Naive thymus-derived CD4-positive, alpha-beta T cell (primary cell): ENCODE measurements at regions of chr19 and their contacts with region 1.

Region 1: DNA sequence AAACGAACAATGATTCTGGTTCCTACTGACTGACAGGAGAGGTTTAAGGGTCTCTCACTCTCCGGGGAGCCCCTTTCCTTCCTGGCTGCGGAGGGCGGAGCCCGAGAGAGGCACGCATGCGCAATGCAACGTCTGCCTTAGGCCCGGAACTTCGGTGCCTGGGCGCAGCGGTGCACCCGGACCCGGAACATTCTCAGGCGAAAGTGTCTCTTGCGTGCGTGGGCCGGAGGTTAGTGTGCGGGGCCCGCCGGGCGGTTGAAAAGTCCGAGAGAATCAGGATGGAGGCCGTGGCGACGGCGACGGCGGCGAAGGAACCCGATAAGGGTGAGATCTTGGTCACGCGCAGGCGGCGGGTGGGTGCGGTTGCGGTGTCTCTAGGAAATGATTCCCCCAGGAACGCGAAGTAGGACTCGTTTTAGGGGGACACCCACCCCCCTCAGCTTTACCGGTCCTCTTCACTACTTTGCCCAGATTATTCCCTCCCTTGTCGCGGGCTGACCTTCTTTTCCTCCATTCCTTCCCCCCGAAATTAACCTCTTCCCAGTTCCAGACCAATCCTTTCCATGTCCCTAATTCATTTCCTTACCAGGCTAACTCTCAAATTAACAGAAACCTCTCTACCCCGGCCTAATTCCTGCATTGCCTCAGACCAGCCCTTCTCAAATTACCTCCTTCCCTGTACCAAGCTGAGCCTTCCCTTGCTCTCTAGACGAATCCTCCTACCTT is at the start of gene CCDC97:
- DNase-seq: peak; percentile 85 to 94 (median 91)
- ATAC-seq: peak; percentile 72
- H3K4me3 ChIP-seq: peak within 1 kb of the TSS; percentile 72
- H3K4me3 Mint-ChIP-seq: peak within 1 kb of the TSS; percentile 93 to 100 (median 96)
- H3K27ac ChIP-seq: peak within 1 kb of the TSS; percentile 87
- H3K27ac Mint-ChIP-seq: peak within 1 kb of the TSS; percentile 94 to 99 (median 98)
- H3K4me1 ChIP-seq: peaks cover 51 to 60% of the 10 kb centered on the region in 2 donors
- H3K4me1 Mint-ChIP-seq: peaks cover 52 to 90% (median 69%) of the 10 kb centered on the region in 7 donors
- H3K27me3 ChIP-seq: no peaks in the 10 kb centered on the region
- H3K27me3 Mint-ChIP-seq: peaks cover 0 to 3% (median 0%) of the 10 kb centered on the region in 5 donors
- total RNA-seq, gene CCDC97: 35.9 to 56.5 (median 49.1) TPM

Region 2: GRCh38 chr19:40974633-40975037 is 335.6 kb before region 1 on chr19:
- CTCF ChIA-PET with region 1: interaction called, 4 read pairs
- POLR2A ChIA-PET with region 1: interaction called, 3 read pairs
- intact Hi-C with region 1: loop called (anchors 1 to 5 kb)
- DNase-seq: peak; percentile 54 to 84 (median 76)
- ATAC-seq: peak; percentile 87
- H3K4me3 ChIP-seq: no peak overlapping the region
- H3K4me3 Mint-ChIP-seq: peak overlapping the region in 1 of 10 donors; percentile 45
- H3K27ac ChIP-seq: no peak overlapping the region
- H3K27ac Mint-ChIP-seq: peak overlapping the region in 3 of 9 donors; percentile 53 to 74 (median 63)
- H3K4me1 ChIP-seq: peaks cover 16 to 19% of the 10 kb centered on the region in 2 donors
- H3K4me1 Mint-ChIP-seq: peaks cover 13 to 53% (median 27%) of the 10 kb centered on the region in 7 donors
- H3K27me3 ChIP-seq: no peaks in the 10 kb centered on the region
- H3K27me3 Mint-ChIP-seq: peaks cover 2 to 38% (median 3%) of the 10 kb centered on the region in 5 donors

Region 3: DNA sequence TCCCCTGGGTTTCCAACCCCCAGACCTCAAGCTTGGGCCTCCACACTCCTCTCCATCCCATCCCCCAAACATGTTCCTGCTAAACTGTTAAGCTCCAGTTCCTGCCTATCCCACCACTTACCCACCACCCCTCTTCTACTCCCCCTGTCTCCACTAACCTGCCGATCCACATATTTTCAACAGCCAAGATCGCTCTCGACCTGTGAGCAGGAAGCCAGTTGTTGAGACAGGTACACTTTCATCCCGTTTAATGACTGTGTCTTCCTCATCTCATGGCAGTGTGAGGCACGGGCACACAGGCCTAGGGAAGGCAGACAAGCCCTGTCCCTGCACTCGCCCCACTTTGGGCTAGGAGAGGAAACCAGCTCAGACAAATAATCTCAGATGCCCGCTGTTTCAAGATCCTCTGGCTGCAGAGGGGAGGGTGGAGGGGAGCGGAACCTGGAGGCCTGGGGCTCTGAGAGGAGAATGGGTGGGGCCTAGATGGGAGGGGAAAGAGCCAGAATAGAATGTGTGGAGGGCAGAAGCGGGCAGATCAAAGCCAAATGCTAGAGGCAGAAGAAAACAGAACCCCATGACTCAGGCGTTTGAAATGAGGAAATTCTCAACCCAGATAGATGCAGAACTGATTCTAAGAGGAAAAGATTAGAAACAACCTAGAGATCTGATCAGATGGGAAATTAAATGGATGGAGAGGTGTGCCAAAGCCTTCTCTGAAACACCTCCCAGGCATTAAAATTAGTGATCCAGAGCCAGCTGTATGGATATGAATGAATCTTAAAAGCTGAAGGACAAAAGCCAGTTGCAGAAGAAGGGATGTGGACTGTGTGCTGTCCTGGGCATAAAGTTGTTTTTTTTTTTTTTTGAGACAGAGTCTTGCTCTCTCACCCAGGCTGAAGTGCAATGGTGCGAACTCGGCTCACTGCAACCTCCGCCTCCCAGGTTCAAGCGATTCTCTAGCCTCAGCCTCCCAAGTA is 134.1 kb before region 1 on chr19:
- CTCF ChIA-PET with region 1: no interaction called
- POLR2A ChIA-PET with region 1: no interaction called
- intact Hi-C with region 1: no loop called
- DNase-seq: peak in 7 of 9 donors; percentile 22 to 64 (median 50)
- ATAC-seq: peak; percentile 95
- H3K4me3 ChIP-seq: no peak overlapping the region
- H3K4me3 Mint-ChIP-seq: peak overlapping the region; percentile 46 to 73 (median 64)
- H3K27ac ChIP-seq: peak overlapping the region; percentile 33
- H3K27ac Mint-ChIP-seq: peak overlapping the region; percentile 49 to 87 (median 79)
- H3K4me1 ChIP-seq: peaks cover 0 to 17% of the 10 kb centered on the region in 2 donors
- H3K4me1 Mint-ChIP-seq: peaks cover 7 to 24% (median 17%) of the 10 kb centered on the region in 7 donors
- H3K27me3 ChIP-seq: no peaks in the 10 kb centered on the region
- H3K27me3 Mint-ChIP-seq: no peaks in the 10 kb centered on the region

Region 4: GRCh38 chr19:41206926-41207750 is 103.1 kb before region 1 on chr19:
- CTCF ChIA-PET with region 1: interaction called, 78 read pairs
- POLR2A ChIA-PET with region 1: interaction called, 66 read pairs
- intact Hi-C with region 1: loop called (anchors 1 kb)
- DNase-seq: no peak
- ATAC-seq: no peak
- H3K4me3 ChIP-seq: no peak overlapping the region
- H3K4me3 Mint-ChIP-seq: no peak overlapping the region
- H3K27ac ChIP-seq: no peak overlapping the region
- H3K27ac Mint-ChIP-seq: peak overlapping the region in 6 of 9 donors; percentile 15 to 85 (median 54)
- H3K4me1 ChIP-seq: no peaks in the 10 kb centered on the region
- H3K4me1 Mint-ChIP-seq: peaks cover 3 to 12% (median 7%) of the 10 kb centered on the region in 7 donors
- H3K27me3 ChIP-seq: no peaks in the 10 kb centered on the region
- H3K27me3 Mint-ChIP-seq: no peaks in the 10 kb centered on the region

Region 5: GRCh38 chr19:41327576-41328156 is 17.5 kb after region 1 on chr19:
- CTCF ChIA-PET with region 1: interaction called, 3 read pairs
- POLR2A ChIA-PET with region 1: interaction called, 7 read pairs
- intact Hi-C with region 1: loop called (anchors 1 to 2 kb)
- DNase-seq: peak; percentile 57 to 95 (median 66)
- ATAC-seq: peak; percentile 75
- H3K4me3 ChIP-seq: peak overlapping the region; percentile 42
- H3K4me3 Mint-ChIP-seq: peak overlapping the region; percentile 74 to 88 (median 82)
- H3K27ac ChIP-seq: peak overlapping the region; percentile 85
- H3K27ac Mint-ChIP-seq: peak overlapping the region; percentile 86 to 99 (median 94)
- H3K4me1 ChIP-seq: peaks cover 36 to 57% of the 10 kb centered on the region in 2 donors
- H3K4me1 Mint-ChIP-seq: peaks cover 59 to 77% (median 68%) of the 10 kb centered on the region in 7 donors
- H3K27me3 ChIP-seq: no peaks in the 10 kb centered on the region
- H3K27me3 Mint-ChIP-seq: no peaks in the 10 kb centered on the region

Region 6: DNA sequence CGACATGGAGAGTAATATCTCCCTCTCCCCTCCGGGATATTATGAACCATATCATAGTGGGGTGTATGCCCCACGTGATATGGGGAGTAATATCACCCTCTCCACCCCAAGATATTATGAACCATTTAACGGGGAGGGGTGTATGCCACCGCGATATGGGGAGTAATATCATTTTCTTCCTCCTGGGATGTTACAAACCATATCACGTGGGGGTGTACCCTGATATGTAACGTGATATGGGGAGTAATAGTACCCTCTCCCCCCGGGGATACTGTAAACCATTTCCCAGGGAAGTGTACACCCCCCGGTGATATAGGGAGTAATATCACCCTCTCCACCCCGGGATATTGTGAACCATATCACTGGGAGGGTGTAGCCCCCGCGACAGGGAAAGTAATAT is 194.9 kb after region 1 on chr19:
- CTCF ChIA-PET with region 1: no interaction called
- POLR2A ChIA-PET with region 1: no interaction called
- intact Hi-C with region 1: no loop called
- DNase-seq: no peak
- ATAC-seq: no peak
- H3K4me3 ChIP-seq: no peak overlapping the region
- H3K4me3 Mint-ChIP-seq: no peak overlapping the region
- H3K27ac ChIP-seq: no peak overlapping the region
- H3K27ac Mint-ChIP-seq: no peak overlapping the region
- H3K4me1 ChIP-seq: no peaks in the 10 kb centered on the region
- H3K4me1 Mint-ChIP-seq: peaks cover 0 to 5% (median 0%) of the 10 kb centered on the region in 7 donors
- H3K27me3 ChIP-seq: no peaks in the 10 kb centered on the region
- H3K27me3 Mint-ChIP-seq: peaks cover 20 to 48% (median 41%) of the 10 kb centered on the region in 5 donors

Region 7: DNA sequence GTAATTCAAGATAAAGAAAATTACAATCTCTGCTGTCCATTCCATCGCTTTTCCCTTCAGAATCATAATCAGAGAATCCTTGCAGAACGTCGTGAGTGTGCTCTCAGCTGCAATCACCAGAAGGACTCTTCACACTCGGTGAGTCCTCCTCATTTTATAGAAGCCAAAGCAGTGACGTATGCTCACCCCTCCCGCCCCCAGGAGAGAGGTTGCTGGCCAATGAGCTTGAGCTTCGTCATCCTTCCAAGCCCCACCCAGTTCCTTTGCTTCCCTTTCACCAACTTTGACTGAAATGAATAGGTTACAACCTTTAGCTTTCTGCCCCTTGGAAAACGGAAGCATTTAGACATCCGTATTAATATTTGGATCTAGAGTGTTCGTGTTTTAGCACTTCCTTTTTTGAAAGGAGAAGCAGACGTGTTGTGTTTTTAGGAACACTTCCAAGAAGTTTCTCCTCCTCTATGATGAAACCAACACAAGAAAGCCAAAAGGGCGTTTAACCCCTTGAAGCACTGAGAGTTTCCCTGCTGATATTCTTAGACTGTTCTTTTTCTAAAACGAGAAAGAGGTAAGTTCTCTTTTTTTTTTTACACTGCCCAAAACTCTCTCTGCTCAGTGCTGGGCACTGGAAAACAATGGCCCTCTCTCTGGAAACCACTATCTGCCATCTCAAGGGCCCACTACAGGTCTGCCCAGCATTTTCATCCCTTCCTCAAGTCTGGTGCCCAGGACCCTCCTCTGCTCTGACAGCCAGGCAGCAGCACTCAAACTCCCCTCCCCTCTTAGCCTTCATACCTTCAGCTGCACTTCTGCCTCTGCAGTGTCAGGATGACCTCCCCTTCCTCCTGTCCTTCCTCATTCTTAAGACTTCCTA is 221.5 kb after region 1 on chr19:
- CTCF ChIA-PET with region 1: no interaction called
- POLR2A ChIA-PET with region 1: no interaction called
- intact Hi-C with region 1: loop called in 1 of 2 experiments (anchors 5 kb)
- DNase-seq: peak; percentile 59 to 95 (median 93)
- ATAC-seq: peak; percentile 95
- H3K4me3 ChIP-seq: peak overlapping the region; percentile 46
- H3K4me3 Mint-ChIP-seq: peak overlapping the region; percentile 77 to 98 (median 84)
- H3K27ac ChIP-seq: peak overlapping the region; percentile 75
- H3K27ac Mint-ChIP-seq: peak overlapping the region; percentile 83 to 98 (median 92)
- H3K4me1 ChIP-seq: peaks cover 32 to 46% of the 10 kb centered on the region in 2 donors
- H3K4me1 Mint-ChIP-seq: peaks cover 50 to 70% (median 64%) of the 10 kb centered on the region in 7 donors
- H3K27me3 ChIP-seq: no peaks in the 10 kb centered on the region
- H3K27me3 Mint-ChIP-seq: peaks cover 0 to 7% (median 0%) of the 10 kb centered on the region in 5 donors